AG04449 (cell line): ENCODE measurements at regions of chr4 and their contacts with region 1.

Region 1: GRCh38 chr4:25986807-25987206 is 72.8 kb downstream of the SMIM20 start:
- DNase-seq: no peak
- H3K4me3 ChIP-seq: no peak overlapping the region
- CTCF ChIP-seq: no peak

Region 2: GRCh38 chr4:25970226-25970675 is 16.6 kb before region 1 on chr4:
- CTCF ChIA-PET with region 1: interaction called, 70 read pairs
- POLR2A ChIA-PET with region 1: no interaction called
- DNase-seq: no peak
- H3K4me3 ChIP-seq: no peak overlapping the region
- CTCF ChIP-seq: no peak

Region 3: DNA sequence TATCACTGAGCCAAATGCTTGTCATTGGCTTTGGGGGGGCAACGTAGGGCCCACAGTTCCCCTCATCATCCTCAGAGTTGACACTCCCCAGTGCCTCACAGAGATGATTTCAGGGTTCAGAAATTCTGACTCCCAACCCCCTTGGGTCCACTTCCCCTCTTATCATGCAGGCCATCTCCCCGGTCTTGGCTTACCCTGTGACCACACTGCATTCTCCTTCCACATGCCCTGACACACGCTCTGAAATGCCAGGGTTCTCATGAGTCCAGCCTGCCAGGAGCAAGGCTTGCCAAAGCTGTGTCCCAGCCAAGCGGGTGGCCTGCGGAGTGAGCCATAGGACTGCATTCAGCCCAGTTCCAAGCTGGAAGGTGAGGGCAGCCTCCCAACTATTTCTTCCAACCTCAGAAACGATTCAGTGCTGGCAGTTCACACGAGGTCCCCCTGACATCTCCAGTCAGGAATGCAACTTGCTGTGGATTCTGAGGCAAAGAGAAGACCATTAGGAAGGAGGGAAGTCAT is 28.4 kb after region 1 on chr4:
- CTCF ChIA-PET with region 1: interaction called, 31 read pairs
- POLR2A ChIA-PET with region 1: no interaction called
- DNase-seq: peak; percentile 97
- H3K4me3 ChIP-seq: no peak overlapping the region
- CTCF ChIP-seq: no peak

Region 4: GRCh38 chr4:26319467-26319948 is 332.7 kb after region 1 on chr4:
- CTCF ChIA-PET with region 1: interaction called, 25 read pairs
- POLR2A ChIA-PET with region 1: no interaction called
- DNase-seq: peak; percentile 98
- H3K4me3 ChIP-seq: peak overlapping the region; percentile 90
- CTCF ChIP-seq: no peak